ENCODE measurements at regions of chr17 and their contacts with region 1.

Region 1: DNA sequence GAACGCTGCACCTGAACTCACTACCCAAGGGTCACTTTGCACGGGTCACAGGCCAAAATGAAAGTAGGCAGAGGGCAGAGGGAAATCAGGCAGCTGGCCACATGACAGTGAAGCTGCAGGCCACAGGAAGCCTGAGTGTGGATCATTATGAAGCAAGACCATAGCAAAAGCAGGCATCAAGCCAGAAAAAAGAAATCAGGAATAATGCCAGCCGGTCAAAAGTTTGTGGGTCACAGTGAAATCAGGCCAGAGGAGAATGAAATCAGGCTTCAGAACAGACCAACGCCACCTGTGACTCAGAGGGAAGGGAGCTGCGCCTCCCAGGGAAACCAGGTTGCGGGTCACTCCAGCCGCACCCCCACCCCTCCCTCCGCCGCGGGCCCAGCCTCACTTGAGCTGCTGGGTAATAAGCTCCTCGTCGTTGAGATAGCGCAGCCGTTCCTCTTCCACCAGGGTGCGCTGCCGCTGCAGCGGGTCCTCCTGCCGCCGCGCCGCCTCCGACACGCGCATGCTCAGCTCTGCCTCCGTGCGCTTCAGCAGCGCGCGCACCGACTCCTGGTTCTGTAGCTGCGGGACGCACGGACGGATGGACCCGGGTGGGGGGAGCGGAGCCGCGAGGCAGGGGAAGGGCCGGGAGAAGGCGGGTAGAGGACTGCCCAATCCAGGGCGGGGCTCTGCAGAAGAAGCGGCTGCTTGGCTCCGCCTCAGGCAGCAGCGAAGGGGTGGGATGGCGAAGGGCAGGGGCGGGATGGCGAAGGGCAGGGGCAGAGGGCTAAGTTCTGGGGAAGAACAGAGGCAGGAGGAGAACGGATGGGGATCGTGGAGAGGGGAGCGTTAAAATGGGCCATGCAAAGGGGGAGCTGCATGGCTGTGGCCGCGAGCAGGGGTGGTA is 47.7 kb downstream of the SRCIN1 start:
- DNase-seq: peak; percentile 92
- ATAC-seq: peak; percentile 90
- H3K4me3 ChIP-seq: peak overlapping the region; percentile 46 to 61
- H3K27ac ChIP-seq: peak overlapping the region; percentile 47
- H3K4me1 ChIP-seq: peaks cover 21 to 42% of the 10 kb centered on the region in 2 experiments
- H3K27me3 ChIP-seq: no peaks in the 10 kb centered on the region
- CTCF ChIP-seq: peak; percentile 88 to 97 (median 95)
- POLR2A ChIP-seq: no peak
- RAD21 ChIP-seq: peak; percentile 93

Region 2: DNA sequence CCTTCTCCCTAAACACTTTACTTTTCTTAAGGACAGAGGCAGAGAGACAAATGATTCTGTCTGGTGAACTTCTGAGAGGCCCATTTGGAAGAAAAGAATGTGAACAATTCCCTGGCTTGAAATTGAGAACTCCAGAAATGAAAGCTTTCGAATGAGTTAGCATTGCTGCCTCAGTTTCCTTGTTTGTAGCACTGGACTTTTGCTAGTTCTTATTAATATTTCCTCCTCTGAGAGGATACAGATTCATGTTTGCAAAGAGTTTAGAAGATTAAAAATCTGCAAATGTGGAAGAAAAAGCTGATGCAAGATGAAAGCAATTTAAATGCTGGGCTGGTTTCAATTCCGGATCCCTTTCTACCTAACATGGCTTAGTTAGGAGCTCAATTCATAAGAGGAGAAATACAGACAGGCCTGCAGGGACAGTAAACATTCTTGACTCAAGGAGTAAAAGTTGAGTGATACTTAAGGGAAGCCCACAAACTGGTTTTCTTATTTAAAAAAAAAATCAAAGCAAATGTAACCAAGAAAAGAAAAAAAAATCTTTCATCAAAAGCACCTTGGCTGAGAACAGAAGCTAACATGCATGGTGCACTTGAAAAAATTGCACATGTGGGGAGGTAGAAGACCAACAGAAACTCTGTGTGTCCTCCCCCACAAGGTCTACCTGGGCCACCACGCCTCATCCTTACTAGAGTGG is 840.3 kb before region 1 on chr17:
- CTCF ChIA-PET with region 1: no interaction called
- POLR2A ChIA-PET with region 1: no interaction called
- RAD21 ChIA-PET with region 1: no interaction called
- intact Hi-C with region 1: no loop called
- DNase-seq: no peak
- ATAC-seq: no peak
- H3K4me3 ChIP-seq: no peak overlapping the region
- H3K27ac ChIP-seq: no peak overlapping the region
- H3K4me1 ChIP-seq: peaks cover 10 to 12% of the 10 kb centered on the region in 2 experiments
- H3K27me3 ChIP-seq: no peaks in the 10 kb centered on the region
- CTCF ChIP-seq: no peak
- POLR2A ChIP-seq: no peak
- RAD21 ChIP-seq: no peak

Region 3: GRCh38 chr17:38379438-38379837 is 178.6 kb before region 1 on chr17:
- CTCF ChIA-PET with region 1: no interaction called
- POLR2A ChIA-PET with region 1: no interaction called
- RAD21 ChIA-PET with region 1: no interaction called
- intact Hi-C with region 1: no loop called
- DNase-seq: no peak
- ATAC-seq: no peak
- H3K4me3 ChIP-seq: no peak overlapping the region
- H3K27ac ChIP-seq: no peak overlapping the region
- H3K4me1 ChIP-seq: no peaks in the 10 kb centered on the region
- H3K27me3 ChIP-seq: no peaks in the 10 kb centered on the region
- CTCF ChIP-seq: no peak
- POLR2A ChIP-seq: no peak
- RAD21 ChIP-seq: no peak

Region 4: GRCh38 chr17:38498186-38498752 is 59.8 kb before region 1 on chr17:
- CTCF ChIA-PET with region 1: no interaction called
- POLR2A ChIA-PET with region 1: no interaction called
- RAD21 ChIA-PET with region 1: no interaction called
- intact Hi-C with region 1: no loop called
- DNase-seq: no peak
- ATAC-seq: no peak
- H3K4me3 ChIP-seq: no peak overlapping the region
- H3K27ac ChIP-seq: no peak overlapping the region
- H3K4me1 ChIP-seq: no peaks in the 10 kb centered on the region
- H3K27me3 ChIP-seq: no peaks in the 10 kb centered on the region
- CTCF ChIP-seq: no peak
- POLR2A ChIP-seq: no peak
- RAD21 ChIP-seq: no peak

Region 5: DNA sequence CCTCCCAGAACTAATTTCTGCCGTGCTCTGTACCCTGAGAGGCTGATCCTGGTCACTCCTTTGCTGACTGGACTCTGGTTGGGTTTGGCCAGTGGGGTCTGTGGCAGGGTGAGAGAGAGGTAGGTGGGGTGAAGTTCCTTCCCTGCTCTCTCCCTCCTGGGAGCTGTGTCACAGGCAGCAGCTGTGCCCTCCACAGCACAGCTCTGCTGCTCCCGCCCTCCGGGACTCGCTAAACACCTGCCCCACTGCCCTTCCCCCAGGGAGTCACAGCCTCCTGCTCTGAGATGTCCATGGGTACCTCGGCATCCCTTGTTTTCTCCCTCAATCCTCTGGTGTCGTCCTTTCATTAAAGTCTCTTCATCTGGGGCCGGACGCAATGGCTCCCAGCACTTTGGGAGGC is 18.7 kb before region 1 on chr17:
- CTCF ChIA-PET with region 1: interaction called, 26 read pairs
- POLR2A ChIA-PET with region 1: interaction called, 3 read pairs
- RAD21 ChIA-PET with region 1: interaction called in 1 of 2 experiments, 4 read pairs
- intact Hi-C with region 1: no loop called
- DNase-seq: no peak
- ATAC-seq: no peak
- H3K4me3 ChIP-seq: no peak overlapping the region
- H3K27ac ChIP-seq: no peak overlapping the region
- H3K4me1 ChIP-seq: no peaks in the 10 kb centered on the region
- H3K27me3 ChIP-seq: no peaks in the 10 kb centered on the region
- CTCF ChIP-seq: no peak
- POLR2A ChIP-seq: no peak
- RAD21 ChIP-seq: no peak

Region 6: DNA sequence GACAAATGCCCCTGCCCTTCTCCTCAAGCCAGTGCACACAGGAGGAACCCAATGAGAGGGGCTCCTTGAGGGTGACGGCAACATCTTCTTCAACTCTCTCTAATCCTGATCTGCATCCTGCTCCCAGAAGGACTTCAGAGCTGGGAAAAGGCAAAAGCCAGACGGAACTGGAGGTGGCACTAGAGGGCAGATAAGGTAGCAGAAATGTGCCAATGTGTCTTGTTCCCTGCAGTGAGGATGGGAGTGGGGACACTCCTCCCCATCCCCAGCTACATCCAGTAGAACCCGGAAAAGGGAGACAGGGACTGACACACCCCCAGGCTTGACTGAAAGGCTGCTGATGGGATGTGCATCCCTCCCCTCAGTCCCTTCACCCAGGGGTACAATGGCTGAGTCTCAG is 19.2 kb after region 1 on chr17:
- CTCF ChIA-PET with region 1: interaction called, 100 read pairs
- POLR2A ChIA-PET with region 1: interaction called, 4 read pairs
- RAD21 ChIA-PET with region 1: interaction called, 7 to 21 read pairs
- intact Hi-C with region 1: no loop called
- DNase-seq: no peak
- ATAC-seq: no peak
- H3K4me3 ChIP-seq: no peak overlapping the region
- H3K27ac ChIP-seq: no peak overlapping the region
- H3K4me1 ChIP-seq: peaks cover 20 to 37% of the 10 kb centered on the region in 2 experiments
- H3K27me3 ChIP-seq: no peaks in the 10 kb centered on the region
- CTCF ChIP-seq: peak; percentile 17 to 21 (median 18); a peak in 1 of 6 replicates
- POLR2A ChIP-seq: no peak
- RAD21 ChIP-seq: no peak

Region 7: GRCh38 chr17:38605888-38606645 is 48.0 kb after region 1 on chr17 and contains the start of gene SRCIN1:
- CTCF ChIA-PET with region 1: interaction called, 20 read pairs
- POLR2A ChIA-PET with region 1: interaction called, 4 read pairs
- RAD21 ChIA-PET with region 1: no interaction called
- intact Hi-C with region 1: no loop called
- DNase-seq: no peak
- ATAC-seq: peak; percentile 66
- H3K4me3 ChIP-seq: peak within 1 kb of the TSS; percentile 48 to 63
- H3K27ac ChIP-seq: peak within 1 kb of the TSS; percentile 64
- H3K4me1 ChIP-seq: peaks cover 24 to 39% of the 10 kb centered on the region in 2 experiments
- H3K27me3 ChIP-seq: no peaks in the 10 kb centered on the region
- CTCF ChIP-seq: peak; percentile 97 to 100 (median 100)
- POLR2A ChIP-seq: no peak
- RAD21 ChIP-seq: no peak
- total RNA-seq, gene SRCIN1: 10.5 TPM

Region 8: GRCh38 chr17:38947189-38947588 is 389.1 kb after region 1 on chr17:
- CTCF ChIA-PET with region 1: no interaction called
- POLR2A ChIA-PET with region 1: no interaction called
- RAD21 ChIA-PET with region 1: no interaction called
- intact Hi-C with region 1: no loop called
- DNase-seq: no peak
- ATAC-seq: no peak
- H3K4me3 ChIP-seq: no peak overlapping the region
- H3K27ac ChIP-seq: no peak overlapping the region
- H3K4me1 ChIP-seq: no peaks in the 10 kb centered on the region
- H3K27me3 ChIP-seq: no peaks in the 10 kb centered on the region
- CTCF ChIP-seq: no peak
- POLR2A ChIP-seq: no peak
- RAD21 ChIP-seq: no peak

Measured in HCT116 (cell line).